Activated naive CD4-positive, alpha-beta T cell treated with anti-CD3 and anti-CD28 coated beads for 36 hours (primary cell): ENCODE measurements at regions of chrX and their contacts with region 1.

Region 1: GRCh38 chrX:119482481-119483480 is 14.5 kb downstream of the SLC25A5 start:
- DNase-seq: peak; percentile 68
- H3K4me3 Mint-ChIP-seq: peak overlapping the region; percentile 70
- H3K27ac Mint-ChIP-seq: no peak overlapping the region
- H3K4me1 Mint-ChIP-seq: peaks cover 11% of the 10 kb centered on the region
- H3K27me3 Mint-ChIP-seq: no peaks in the 10 kb centered on the region

Region 2: DNA sequence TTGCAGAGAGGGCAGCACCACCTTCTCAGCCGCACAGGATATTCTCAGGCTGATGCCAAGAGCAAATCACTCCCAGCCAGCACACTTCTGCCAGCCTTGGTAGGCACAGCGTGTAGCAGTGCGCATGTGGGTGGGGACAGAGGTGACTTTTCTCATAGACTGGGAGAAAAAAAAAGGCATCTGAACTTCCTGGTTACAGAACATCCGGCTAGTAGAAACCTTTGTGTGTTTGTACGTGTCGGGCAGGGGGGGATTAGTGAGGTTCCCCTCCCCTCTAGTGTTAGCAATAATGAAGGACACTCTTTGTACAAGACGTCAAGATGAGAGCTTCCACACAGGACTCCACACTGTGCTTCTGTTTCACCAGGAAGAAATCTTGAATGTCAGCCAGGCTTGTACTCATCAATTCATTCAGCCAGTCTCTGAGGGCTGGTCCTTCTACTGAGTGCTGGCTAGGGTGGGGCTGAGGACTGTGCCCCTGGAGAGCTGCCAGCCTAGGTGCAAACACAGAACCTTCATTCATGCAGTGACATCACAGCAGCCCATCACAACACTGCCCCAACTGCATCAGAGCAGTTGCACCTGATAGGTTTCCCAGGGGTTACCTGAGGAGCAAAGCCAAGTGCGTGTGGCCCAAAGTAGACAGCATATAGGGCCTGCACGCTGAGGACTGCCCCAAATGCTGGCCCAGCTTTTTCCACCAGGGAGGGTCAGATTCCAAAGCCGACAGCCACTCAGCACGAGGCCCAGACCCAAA is 20.1 kb after region 1 on chrX:
- CTCF ChIA-PET with region 1: interaction called, 5 read pairs
- intact Hi-C with region 1: loop called (anchors 2 kb)
- DNase-seq: peak; percentile 49
- H3K4me3 Mint-ChIP-seq: no peak overlapping the region
- H3K27ac Mint-ChIP-seq: peak overlapping the region; percentile 77
- H3K4me1 Mint-ChIP-seq: peaks cover 16% of the 10 kb centered on the region
- H3K27me3 Mint-ChIP-seq: no peaks in the 10 kb centered on the region

Region 3: DNA sequence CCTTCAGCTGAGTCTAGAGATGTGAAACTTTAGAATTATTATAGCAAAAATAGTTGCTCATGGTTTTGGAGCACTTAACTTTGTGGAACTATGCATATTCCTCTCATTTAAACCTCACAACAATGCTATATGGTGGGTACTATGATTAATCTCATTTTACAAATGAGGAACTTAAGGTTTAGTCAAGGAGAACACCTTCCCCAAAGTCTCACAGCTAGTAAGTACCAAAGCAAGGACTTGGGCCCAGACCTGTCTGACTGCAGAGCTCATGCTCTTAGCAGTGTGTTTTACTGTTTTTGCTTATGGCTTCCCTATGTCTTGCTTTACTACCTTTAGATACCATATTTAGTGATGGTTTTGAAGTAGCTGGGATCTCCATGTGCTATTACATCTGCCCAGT is 96.6 kb after region 1 on chrX:
- CTCF ChIA-PET with region 1: no interaction called
- intact Hi-C with region 1: no loop called
- DNase-seq: no peak
- H3K4me3 Mint-ChIP-seq: no peak overlapping the region
- H3K27ac Mint-ChIP-seq: no peak overlapping the region
- H3K4me1 Mint-ChIP-seq: peaks cover 10% of the 10 kb centered on the region
- H3K27me3 Mint-ChIP-seq: no peaks in the 10 kb centered on the region

Region 4: DNA sequence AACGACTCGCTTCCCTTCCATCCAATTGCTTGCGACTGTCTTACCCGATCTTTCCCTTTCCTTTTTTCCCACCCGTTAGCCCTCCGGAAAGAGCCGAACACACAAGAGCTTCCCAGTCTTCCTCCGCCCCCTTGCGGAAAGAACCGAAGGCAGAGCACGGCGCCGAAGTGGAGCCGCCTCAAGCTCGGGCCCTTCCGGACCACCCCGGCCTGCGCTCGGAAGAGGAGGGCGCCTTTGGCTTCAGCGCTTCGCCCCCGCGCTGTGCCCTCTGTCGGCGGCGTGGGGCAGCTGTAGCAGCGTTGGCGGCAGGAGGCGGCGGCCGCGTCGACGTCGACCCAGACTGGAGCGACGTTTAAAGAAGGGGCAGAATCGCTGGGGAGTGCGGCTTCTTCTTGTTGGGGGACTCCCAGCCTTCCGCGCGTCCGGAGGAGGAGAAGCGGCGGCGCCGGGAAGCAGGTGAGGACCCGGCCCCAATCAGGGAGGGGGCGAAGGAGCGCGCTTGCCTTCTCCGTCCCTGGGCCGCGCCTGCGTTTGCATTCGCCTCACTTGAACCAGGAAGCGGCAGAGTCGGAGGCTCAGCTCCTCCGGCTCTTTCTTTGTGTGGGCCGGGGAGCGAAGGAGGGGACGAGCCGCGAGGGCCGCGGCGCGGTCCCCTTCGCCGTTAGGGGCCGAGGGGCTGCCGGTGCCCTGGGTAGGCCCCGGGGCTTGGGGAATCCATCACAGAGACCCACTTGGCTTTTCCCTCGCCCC is 767.9 kb after region 1 on chrX and contains the start of gene ZBTB33:
- CTCF ChIA-PET with region 1: no interaction called
- intact Hi-C with region 1: no loop called
- DNase-seq: peak; percentile 92
- H3K4me3 Mint-ChIP-seq: peak within 1 kb of the TSS; percentile 89
- H3K27ac Mint-ChIP-seq: peak within 1 kb of the TSS; percentile 96
- H3K4me1 Mint-ChIP-seq: peaks cover 22% of the 10 kb centered on the region
- H3K27me3 Mint-ChIP-seq: no peaks in the 10 kb centered on the region
- total RNA-seq, gene ZBTB33: 12.1 to 12.6 TPM